K562 (cell line): ENCODE measurements at regions of chr20 and their contacts with region 1.

Region 1: DNA sequence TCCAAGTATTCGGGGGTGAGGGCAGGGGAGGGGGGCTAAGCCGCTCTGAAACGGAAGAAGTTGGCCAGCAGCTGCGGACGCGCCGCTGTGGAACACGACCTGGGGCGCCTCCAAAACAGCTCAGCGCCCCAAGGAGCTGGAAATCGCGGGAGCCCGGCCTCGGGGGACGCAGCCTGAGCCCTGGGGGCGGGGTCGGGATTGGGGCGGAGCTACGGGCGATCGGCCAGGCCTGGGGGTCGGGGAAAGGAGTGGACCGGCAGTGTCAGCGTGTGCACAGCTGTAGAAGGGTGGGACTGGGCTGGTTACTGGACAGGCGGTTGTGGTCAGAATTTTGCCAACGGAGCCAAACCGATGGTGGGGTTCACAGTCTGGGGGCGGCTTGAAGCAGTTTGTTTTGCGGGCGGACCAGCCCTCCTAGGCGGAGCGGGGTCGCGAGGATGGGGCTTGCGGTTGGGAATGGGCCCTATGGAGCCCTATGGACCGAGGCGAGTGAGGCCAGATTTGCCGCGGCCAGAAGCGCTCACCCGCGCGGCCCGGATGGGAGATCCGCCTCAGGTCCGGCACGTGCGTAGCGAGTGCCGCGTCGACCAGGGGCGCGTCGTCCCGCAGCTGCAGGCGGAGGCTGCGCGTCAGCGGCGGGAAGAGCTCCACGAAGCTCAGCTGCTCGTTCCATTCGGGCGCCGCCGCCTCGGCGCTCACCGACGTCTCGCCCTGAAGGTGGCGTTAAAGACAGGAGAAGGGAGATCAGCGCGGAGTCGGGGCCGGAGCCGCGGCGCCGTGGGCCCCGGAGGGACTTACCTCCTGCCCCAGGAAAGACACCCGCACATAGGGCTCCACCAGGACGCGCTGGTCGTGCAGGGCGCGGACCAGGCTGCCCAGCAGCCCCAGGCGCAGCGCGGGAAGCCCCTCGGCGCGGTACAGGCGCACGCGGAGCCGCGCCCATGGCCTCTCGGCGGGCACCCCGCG is 14.3 kb upstream of the SPAG4 start:
- DNase-seq: peak; percentile 83 to 89 (median 86)
- ATAC-seq: peak; percentile 94
- H3K4me3 ChIP-seq: peak overlapping the region; percentile 23
- H3K27ac ChIP-seq: no peak overlapping the region
- H3K4me1 ChIP-seq: peaks cover 0 to 31% of the 10 kb centered on the region in 2 experiments; a peak in 3 of 5 replicates
- H3K27me3 ChIP-seq: peaks cover 0 to 25% of the 10 kb centered on the region in 2 experiments; a peak in 4 of 5 replicates
- CTCF ChIP-seq: peak; percentile 62 to 70 (median 65)
- EP300 ChIP-seq: no peak
- POLR2A ChIP-seq: no peak
- RAD21 ChIP-seq: peak; percentile 38 to 67; a peak in 3 of 4 replicates

Region 2: GRCh38 chr20:35511814-35512420 is 89.4 kb before region 1 on chr20:
- CTCF ChIA-PET with region 1: no interaction called
- POLR2A ChIA-PET with region 1: no interaction called
- in situ Hi-C with region 1: no loop called
- intact Hi-C with region 1: loop called (anchors 5 kb)
- DNase-seq: peak in 3 of 4 experiments; percentile 30 to 48 (median 37)
- ATAC-seq: peak; percentile 65
- H3K4me3 ChIP-seq: no peak overlapping the region
- H3K27ac ChIP-seq: no peak overlapping the region
- H3K4me1 ChIP-seq: peaks cover 11 to 18% of the 10 kb centered on the region in 2 experiments; a peak in 4 of 5 replicates
- H3K27me3 ChIP-seq: no peaks in the 10 kb centered on the region
- CTCF ChIP-seq: peak; percentile 62 to 87 (median 81)
- EP300 ChIP-seq: no peak
- POLR2A ChIP-seq: no peak
- RAD21 ChIP-seq: peak; percentile 61 to 79